HepG2 (cell line): ENCODE measurements at regions of chr12 and their contacts with region 1.

Region 1: GRCh38 chr12:85575120-85576096 is 260.8 kb downstream of the RASSF9 start:
- DNase-seq: peak; percentile 63
- ATAC-seq: peak; percentile 100
- H3K4me3 ChIP-seq: no peak overlapping the region
- H3K27ac ChIP-seq: no peak overlapping the region
- H3K4me1 ChIP-seq: no peaks in the 10 kb centered on the region
- H3K27me3 ChIP-seq: no peaks in the 10 kb centered on the region
- CTCF ChIP-seq: peak; percentile 85
- EP300 ChIP-seq: no peak
- POLR2A ChIP-seq: no peak
- RAD21 ChIP-seq: peak; percentile 58

Region 2: DNA sequence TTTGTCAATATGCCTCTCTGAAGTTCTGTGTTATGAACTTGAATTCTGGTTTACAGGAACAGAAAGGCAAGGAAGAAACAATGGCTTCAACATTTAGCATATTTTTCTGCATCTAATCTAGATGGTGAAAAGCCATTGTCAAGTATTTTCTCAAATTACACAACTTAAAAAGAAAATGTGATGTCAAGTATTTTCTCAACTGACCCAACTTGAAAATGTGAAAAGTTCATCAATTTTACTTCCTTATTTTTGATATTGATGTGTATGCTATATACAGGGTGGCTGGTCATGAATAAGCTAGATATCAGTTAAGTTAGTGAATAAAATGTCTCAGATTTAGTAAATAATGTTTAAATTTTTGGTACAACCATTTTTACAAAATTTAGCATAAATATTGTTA is 98.7 kb before region 1 on chr12:
- CTCF ChIA-PET with region 1: no interaction called
- POLR2A ChIA-PET with region 1: no interaction called
- in situ Hi-C with region 1: no loop called
- intact Hi-C with region 1: loop called (anchors 10 kb)
- DNase-seq: no peak
- ATAC-seq: no peak
- H3K4me3 ChIP-seq: no peak overlapping the region
- H3K27ac ChIP-seq: no peak overlapping the region
- H3K4me1 ChIP-seq: no peaks in the 10 kb centered on the region
- H3K27me3 ChIP-seq: no peaks in the 10 kb centered on the region
- CTCF ChIP-seq: no peak
- EP300 ChIP-seq: no peak
- POLR2A ChIP-seq: no peak
- RAD21 ChIP-seq: no peak

Region 3: GRCh38 chr12:85642810-85643209 is 67.4 kb after region 1 on chr12:
- CTCF ChIA-PET with region 1: interaction called, 4 read pairs
- POLR2A ChIA-PET with region 1: no interaction called
- in situ Hi-C with region 1: no loop called
- intact Hi-C with region 1: loop called (anchors 1 kb)
- DNase-seq: peak; percentile 75
- ATAC-seq: peak; percentile 100
- H3K4me3 ChIP-seq: no peak overlapping the region
- H3K27ac ChIP-seq: no peak overlapping the region
- H3K4me1 ChIP-seq: peaks cover 9% of the 10 kb centered on the region; the same call in 1 of the 2 replicates
- H3K27me3 ChIP-seq: no peaks in the 10 kb centered on the region
- CTCF ChIP-seq: peak; percentile 84
- EP300 ChIP-seq: peak; percentile 30 to 36; a peak in 2 of 4 replicates
- POLR2A ChIP-seq: no peak
- RAD21 ChIP-seq: peak; percentile 76

Region 4: GRCh38 chr12:85866986-85867776 is 291.8 kb after region 1 on chr12:
- CTCF ChIA-PET with region 1: interaction called, 11 read pairs
- POLR2A ChIA-PET with region 1: no interaction called
- in situ Hi-C with region 1: loop called (anchors 5 kb)
- intact Hi-C with region 1: loop called (anchors 1 kb)
- DNase-seq: peak; percentile 48
- ATAC-seq: peak; percentile 84
- H3K4me3 ChIP-seq: no peak overlapping the region
- H3K27ac ChIP-seq: no peak overlapping the region
- H3K4me1 ChIP-seq: no peaks in the 10 kb centered on the region
- H3K27me3 ChIP-seq: no peaks in the 10 kb centered on the region
- CTCF ChIP-seq: peak; percentile 74
- EP300 ChIP-seq: no peak
- POLR2A ChIP-seq: no peak
- RAD21 ChIP-seq: 0 out of 2 replicates have a peak, but pooled peaks have one; percentile 34

Region 5: GRCh38 chr12:85872497-85873091 is 297.2 kb after region 1 on chr12:
- CTCF ChIA-PET with region 1: interaction called, 11 read pairs
- POLR2A ChIA-PET with region 1: no interaction called
- in situ Hi-C with region 1: loop called (anchors 5 kb)
- intact Hi-C with region 1: loop called (anchors 1 kb)
- DNase-seq: peak; percentile 47
- ATAC-seq: peak; percentile 68
- H3K4me3 ChIP-seq: no peak overlapping the region
- H3K27ac ChIP-seq: no peak overlapping the region
- H3K4me1 ChIP-seq: no peaks in the 10 kb centered on the region
- H3K27me3 ChIP-seq: no peaks in the 10 kb centered on the region
- CTCF ChIP-seq: peak; percentile 70
- EP300 ChIP-seq: no peak
- POLR2A ChIP-seq: no peak
- RAD21 ChIP-seq: no peak

Region 6: GRCh38 chr12:85920324-85920947 is 345.0 kb after region 1 on chr12:
- CTCF ChIA-PET with region 1: interaction called, 4 read pairs
- POLR2A ChIA-PET with region 1: no interaction called
- in situ Hi-C with region 1: no loop called
- intact Hi-C with region 1: loop called (anchors 1 kb)
- DNase-seq: peak; percentile 12
- ATAC-seq: no peak
- H3K4me3 ChIP-seq: no peak overlapping the region
- H3K27ac ChIP-seq: no peak overlapping the region
- H3K4me1 ChIP-seq: no peaks in the 10 kb centered on the region
- H3K27me3 ChIP-seq: no peaks in the 10 kb centered on the region
- CTCF ChIP-seq: peak; percentile 46
- EP300 ChIP-seq: no peak
- POLR2A ChIP-seq: no peak
- RAD21 ChIP-seq: no peak